Dorsolateral prefrontal cortex (tissue), 120 donors: ENCODE measurements at regions of chr11 and their contacts with region 1.

Region 1: DNA sequence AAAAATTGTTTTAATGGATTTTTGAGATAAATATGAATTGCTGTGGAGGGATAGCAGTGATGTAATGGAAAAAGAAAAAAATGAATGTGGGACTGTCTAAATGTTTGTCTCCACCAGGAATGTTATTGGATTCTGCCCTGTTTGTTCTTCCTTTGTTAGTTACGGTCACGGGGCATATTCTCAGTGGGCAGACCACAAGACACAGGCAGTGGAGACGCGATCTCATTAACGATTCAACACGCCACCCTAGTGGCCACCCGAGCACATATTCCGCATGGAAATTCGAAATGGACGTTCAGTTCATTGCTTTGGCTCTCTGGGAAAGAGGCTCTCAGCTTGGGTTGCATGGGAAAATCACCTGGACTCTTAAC is 151.8 kb upstream of the TTC12 start:
- DNase-seq: peak in 9 of 10 donors; percentile 35 to 81 (median 69)
- H3K4me3 ChIP-seq: peak overlapping the region in 1 of 59 donors; percentile 16
- H3K27ac ChIP-seq: peak overlapping the region in 58 of 59 donors; percentile 18 to 89 (median 78)
- H3K27me3 ChIP-seq: no peaks in the 10 kb centered on the region
- CTCF ChIP-seq: peak; percentile 27 to 81 (median 56)

Region 2: GRCh38 chr11:112977755-112978154 is 184.8 kb before region 1 on chr11:
- intact Hi-C with region 1: loop called in 1 of 2 experiments (anchors 2 kb)
- DNase-seq: peak in 4 of 10 donors; percentile 21 to 40 (median 34)
- H3K4me3 ChIP-seq: peak overlapping the region in 9 of 59 donors; percentile 1 to 29 (median 19)
- H3K27ac ChIP-seq: peak overlapping the region in 57 of 59 donors; percentile 1 to 85 (median 65)
- H3K27me3 ChIP-seq: no peaks in the 10 kb centered on the region
- CTCF ChIP-seq: peak in 15 of 56 donors; percentile 3 to 46 (median 17)

Region 3: DNA sequence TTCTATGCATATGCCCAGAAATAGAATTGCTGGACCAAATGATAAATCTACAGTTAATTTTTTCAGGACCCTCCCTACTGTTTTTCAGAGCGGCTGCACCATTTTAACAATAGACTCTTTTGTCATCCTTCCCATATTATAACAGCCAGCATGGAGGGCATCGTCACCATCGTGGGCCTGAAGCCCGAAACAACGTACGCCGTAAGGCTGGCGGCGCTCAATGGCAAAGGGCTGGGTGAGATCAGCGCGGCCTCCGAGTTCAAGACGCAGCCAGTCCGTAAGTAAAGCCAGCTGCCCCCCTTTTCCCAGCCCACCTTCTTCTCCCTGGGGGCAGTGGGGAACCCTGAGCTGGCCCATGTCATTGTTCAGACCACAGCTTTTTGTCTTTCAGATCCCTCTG is 72.3 kb after region 1 on chr11:
- intact Hi-C with region 1: loop called in 1 of 2 experiments (anchors 5 kb)
- DNase-seq: peak in 9 of 10 donors; percentile 45 to 75 (median 61)
- H3K4me3 ChIP-seq: no peak overlapping the region
- H3K27ac ChIP-seq: peak overlapping the region in 58 of 59 donors; percentile 16 to 93 (median 82)
- H3K27me3 ChIP-seq: no peaks in the 10 kb centered on the region
- CTCF ChIP-seq: peak in 1 of 56 donors; percentile 34

Region 4: DNA sequence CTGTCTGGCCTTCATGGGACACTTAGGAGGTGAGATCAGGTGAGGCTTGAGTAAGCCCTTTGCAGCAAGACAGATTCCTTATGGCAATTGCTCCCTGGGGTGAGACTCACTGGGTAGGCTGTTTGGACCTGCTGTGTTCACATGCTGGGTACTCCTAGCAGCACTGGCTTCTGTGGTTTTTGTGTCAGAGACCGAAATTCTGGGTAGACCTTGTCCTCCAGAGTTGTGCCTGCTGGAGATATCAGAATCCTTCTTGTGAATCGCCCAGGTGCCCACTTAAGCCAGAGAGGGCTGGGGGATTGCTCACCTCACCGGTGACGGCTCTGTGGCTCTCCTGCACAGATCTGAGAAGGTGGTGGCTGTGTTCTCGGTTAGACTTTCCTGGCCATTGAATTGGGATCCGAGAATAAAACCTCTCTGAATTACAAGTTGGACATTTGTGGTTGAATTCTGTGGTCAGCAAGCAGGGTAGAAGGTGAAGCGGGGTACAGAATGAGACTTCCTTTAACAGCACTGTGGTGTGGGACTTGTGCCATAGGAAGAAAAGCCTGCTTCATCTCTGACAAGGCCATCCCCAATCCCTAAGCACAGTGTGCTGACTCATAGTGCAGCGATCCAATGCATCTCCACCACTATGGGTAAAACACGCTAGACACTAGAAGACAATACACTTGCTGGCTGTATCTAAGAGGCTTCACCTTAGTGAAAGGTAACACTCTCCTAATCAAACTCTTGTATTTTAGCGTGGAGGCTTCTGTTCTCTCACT is 99.3 kb after region 1 on chr11:
- intact Hi-C with region 1: loop called in 1 of 2 experiments (anchors 10 kb)
- DNase-seq: peak in 2 of 10 donors; percentile 35 to 51
- H3K4me3 ChIP-seq: no peak overlapping the region
- H3K27ac ChIP-seq: peak overlapping the region in 43 of 59 donors; percentile 0 to 80 (median 55)
- H3K27me3 ChIP-seq: no peaks in the 10 kb centered on the region
- CTCF ChIP-seq: no peak